Activated CD8-positive, alpha-beta T cell treated with anti-CD3 and anti-CD28 coated beads for 36 hours (primary cell): ENCODE measurements at regions of chr1 and their contacts with region 1.

Region 1: GRCh38 chr1:109397538-109398342 is at the start of gene SORT1:
- DNase-seq: peak; percentile 80
- ATAC-seq: peak; percentile 99
- H3K4me3 Mint-ChIP-seq: peak within 1 kb of the TSS; percentile 77
- H3K27ac Mint-ChIP-seq: no peak within 1 kb of the TSS
- H3K4me1 Mint-ChIP-seq: peaks cover 8% of the 10 kb centered on the region
- H3K27me3 Mint-ChIP-seq: peaks cover 33% of the 10 kb centered on the region
- CTCF ChIP-seq: no peak
- total RNA-seq, gene SORT1: 2.5 to 3.2 TPM

Region 2: GRCh38 chr1:109213785-109214468 is 183.8 kb before region 1 on chr1 and contains the start of gene SARS1:
- CTCF ChIA-PET with region 1: interaction called, 9 read pairs
- POLR2A ChIA-PET with region 1: interaction called, 8 read pairs
- intact Hi-C with region 1: loop called (anchors 5 kb)
- DNase-seq: peak; percentile 89
- ATAC-seq: peak; percentile 86
- H3K4me3 Mint-ChIP-seq: peak within 1 kb of the TSS; percentile 100
- H3K27ac Mint-ChIP-seq: peak within 1 kb of the TSS; percentile 99
- H3K4me1 Mint-ChIP-seq: peaks cover 29% of the 10 kb centered on the region
- H3K27me3 Mint-ChIP-seq: no peaks in the 10 kb centered on the region
- CTCF ChIP-seq: no peak
- total RNA-seq, gene SARS1: 226 to 228 TPM

Region 3: DNA sequence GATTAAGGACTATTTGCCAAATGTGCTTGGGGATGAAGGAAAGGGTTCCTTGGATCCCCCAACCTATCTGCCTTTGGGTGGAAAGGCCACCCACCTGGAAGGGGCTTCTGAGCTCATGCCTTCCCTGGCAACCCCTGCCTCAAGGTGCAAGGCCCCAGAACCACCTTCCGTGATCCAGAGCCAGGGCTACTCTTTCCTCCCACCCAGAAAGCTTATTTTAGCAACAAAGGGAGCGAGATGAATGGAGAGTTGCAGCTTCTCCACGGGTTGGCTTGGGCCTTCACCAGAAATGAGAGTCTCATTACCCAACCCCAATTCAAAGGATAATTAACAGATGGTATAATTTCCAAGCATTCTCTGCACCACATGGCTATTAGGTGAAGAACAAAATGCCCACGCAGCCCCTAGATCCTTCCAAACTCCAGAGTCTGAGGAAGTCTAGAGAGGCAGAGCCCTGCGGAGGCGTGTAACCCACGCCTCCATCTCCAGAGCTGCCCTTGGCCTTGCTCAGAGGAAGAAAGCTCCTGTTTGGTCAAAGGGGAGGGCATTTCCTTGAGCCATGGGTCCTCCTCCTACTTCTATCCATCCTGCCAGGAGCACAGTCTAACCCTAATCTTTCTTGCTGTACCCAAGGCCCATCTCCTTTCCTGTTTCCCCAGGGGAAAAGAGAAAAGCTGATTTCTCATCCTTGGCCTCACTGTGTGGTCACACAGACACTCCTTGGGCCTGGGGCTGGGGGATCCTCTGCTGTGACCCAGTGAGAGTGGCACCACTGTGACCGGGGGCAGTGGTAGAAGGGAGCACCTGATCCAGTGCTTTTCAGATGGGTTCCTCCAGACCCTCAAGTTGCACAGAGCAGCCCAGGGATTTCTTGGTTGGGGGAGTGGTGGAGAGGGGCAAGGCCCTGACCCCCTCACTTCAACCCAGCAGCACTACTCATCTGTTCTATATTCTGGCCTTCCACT is 150.1 kb before region 1 on chr1:
- CTCF ChIA-PET with region 1: interaction called, 15 read pairs
- POLR2A ChIA-PET with region 1: interaction called, 3 read pairs
- intact Hi-C with region 1: no loop called
- DNase-seq: no peak
- ATAC-seq: no peak
- H3K4me3 Mint-ChIP-seq: no peak overlapping the region
- H3K27ac Mint-ChIP-seq: no peak overlapping the region
- H3K4me1 Mint-ChIP-seq: peaks cover 9% of the 10 kb centered on the region
- H3K27me3 Mint-ChIP-seq: no peaks in the 10 kb centered on the region
- CTCF ChIP-seq: no peak

Region 4: GRCh38 chr1:109277434-109278204 is 120.1 kb before region 1 on chr1:
- CTCF ChIA-PET with region 1: interaction called, 123 read pairs
- POLR2A ChIA-PET with region 1: interaction called, 5 read pairs
- intact Hi-C with region 1: loop called (anchors 2 kb)
- DNase-seq: peak; percentile 86
- ATAC-seq: peak; percentile 97
- H3K4me3 Mint-ChIP-seq: no peak overlapping the region
- H3K27ac Mint-ChIP-seq: no peak overlapping the region
- H3K4me1 Mint-ChIP-seq: peaks cover 6% of the 10 kb centered on the region
- H3K27me3 Mint-ChIP-seq: no peaks in the 10 kb centered on the region
- CTCF ChIP-seq: peak; percentile 88

Region 5: DNA sequence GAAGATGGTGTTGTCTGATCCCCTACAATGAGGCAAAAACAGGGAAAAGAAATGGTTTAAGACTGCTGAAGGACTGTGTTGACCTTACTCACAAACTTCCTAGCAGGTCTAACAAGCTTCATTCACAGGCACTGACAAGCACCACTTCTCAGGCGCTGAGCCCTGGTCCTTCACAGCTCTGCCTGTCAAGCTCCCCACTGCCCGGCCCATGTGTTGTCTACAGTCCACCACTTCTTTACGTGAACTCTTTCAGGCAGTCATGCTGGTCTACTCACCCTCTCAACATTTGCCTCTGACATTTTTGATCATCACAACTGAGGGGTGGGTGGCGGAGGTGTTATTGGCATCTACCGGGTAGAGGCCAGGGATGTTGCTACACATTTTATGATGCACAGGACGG is 50.2 kb before region 1 on chr1:
- CTCF ChIA-PET with region 1: interaction called, 10 read pairs
- POLR2A ChIA-PET with region 1: no interaction called
- intact Hi-C with region 1: no loop called
- DNase-seq: no peak
- ATAC-seq: no peak
- H3K4me3 Mint-ChIP-seq: no peak overlapping the region
- H3K27ac Mint-ChIP-seq: no peak overlapping the region
- H3K4me1 Mint-ChIP-seq: no peaks in the 10 kb centered on the region
- H3K27me3 Mint-ChIP-seq: no peaks in the 10 kb centered on the region
- CTCF ChIP-seq: no peak

Region 6: GRCh38 chr1:109655601-109656519 is 258.1 kb after region 1 on chr1 and contains the start of gene GSTM4:
- CTCF ChIA-PET with region 1: no interaction called
- POLR2A ChIA-PET with region 1: no interaction called
- intact Hi-C with region 1: no loop called
- DNase-seq: peak; percentile 81
- ATAC-seq: peak; percentile 94
- H3K4me3 Mint-ChIP-seq: peak within 1 kb of the TSS; percentile 78
- H3K27ac Mint-ChIP-seq: peak within 1 kb of the TSS; percentile 83
- H3K4me1 Mint-ChIP-seq: peaks cover 6% of the 10 kb centered on the region
- H3K27me3 Mint-ChIP-seq: peaks cover 2% of the 10 kb centered on the region
- CTCF ChIP-seq: no peak
- total RNA-seq, gene GSTM4: 8.3 to 10.5 TPM

Region 7: DNA sequence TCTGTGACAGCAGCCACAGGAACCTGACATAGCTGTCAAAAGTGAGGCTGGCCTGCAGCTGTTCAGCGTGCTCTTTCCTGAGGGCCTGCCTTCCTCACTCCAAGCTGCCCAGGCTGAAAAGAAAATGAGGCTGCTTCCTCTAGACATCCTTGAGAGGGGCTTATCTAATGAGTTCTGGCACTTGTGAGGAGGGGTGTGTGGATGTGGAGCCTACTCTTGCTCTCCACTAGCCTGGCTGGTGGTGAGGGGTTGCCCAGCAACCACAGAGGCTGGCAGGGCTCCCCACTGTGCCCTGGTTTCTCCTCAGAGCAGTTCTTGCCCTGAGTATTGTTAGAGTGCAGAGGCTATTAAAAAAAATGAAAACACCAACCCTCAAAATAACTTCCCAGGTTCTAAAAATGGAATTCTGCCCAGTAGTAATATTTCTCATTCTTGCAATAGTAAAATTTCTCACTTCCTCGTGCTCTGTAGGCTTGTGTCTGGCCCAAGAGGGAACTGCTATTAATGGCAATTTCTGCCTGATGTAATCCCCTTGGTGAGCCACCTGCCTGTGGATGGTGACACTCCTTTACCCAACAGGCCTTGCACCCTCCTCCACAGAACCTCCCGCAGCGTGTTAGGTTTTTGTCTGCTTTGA is 418.6 kb after region 1 on chr1:
- CTCF ChIA-PET with region 1: no interaction called
- POLR2A ChIA-PET with region 1: no interaction called
- intact Hi-C with region 1: no loop called
- DNase-seq: no peak
- ATAC-seq: no peak
- H3K4me3 Mint-ChIP-seq: no peak overlapping the region
- H3K27ac Mint-ChIP-seq: no peak overlapping the region
- H3K4me1 Mint-ChIP-seq: peaks cover 5% of the 10 kb centered on the region
- H3K27me3 Mint-ChIP-seq: no peaks in the 10 kb centered on the region
- CTCF ChIP-seq: no peak